ENCODE measurements at regions of chr11 and their contacts with region 1.

Region 1: DNA sequence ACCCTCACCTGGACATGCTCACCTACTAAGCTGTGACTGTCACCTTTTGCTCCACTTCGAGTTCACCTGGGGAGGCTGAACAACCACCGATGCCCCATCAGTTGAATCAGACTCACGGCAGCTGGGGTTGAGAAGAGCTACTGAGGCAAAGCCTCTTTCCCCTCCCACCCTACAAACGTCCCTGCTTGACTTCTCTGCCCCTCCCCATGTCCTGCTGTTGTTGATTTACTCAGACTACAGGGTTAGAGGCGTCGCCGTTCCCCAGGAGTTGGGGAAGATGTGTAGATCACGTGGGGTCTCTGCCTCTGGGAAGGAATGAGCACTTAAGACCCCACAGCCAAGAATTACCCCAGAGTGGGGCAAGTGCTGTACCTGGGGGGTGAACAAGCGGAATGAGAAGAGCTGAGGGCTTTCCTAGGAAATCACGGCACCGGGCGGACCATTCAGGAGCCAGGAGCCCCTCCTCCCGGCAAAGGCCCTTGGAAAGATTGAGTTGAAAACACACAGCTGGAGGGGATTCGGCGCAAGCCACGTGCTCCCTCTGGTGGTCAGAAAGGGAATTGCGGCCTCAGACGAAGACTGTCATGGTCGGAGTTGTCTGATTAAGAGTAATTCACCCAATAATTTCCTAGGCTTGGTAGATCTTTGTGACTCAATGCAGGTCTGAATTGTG is 7.0 kb downstream of the FXYD2 start:
- DNase-seq: peak; percentile 92
- ATAC-seq: peak; percentile 31
- H3K4me3 Mint-ChIP-seq: peak overlapping the region; percentile 47
- H3K27ac Mint-ChIP-seq: peak overlapping the region; percentile 95
- H3K4me1 Mint-ChIP-seq: peaks cover 81% of the 10 kb centered on the region
- H3K27me3 Mint-ChIP-seq: no peaks in the 10 kb centered on the region

Region 2: GRCh38 chr11:117796872-117797529 is 20.5 kb before region 1 on chr11 and contains the start of gene DSCAML1:
- CTCF ChIA-PET with region 1: interaction called, 20 read pairs
- POLR2A ChIA-PET with region 1: no interaction called
- DNase-seq: peak; percentile 43
- ATAC-seq: peak; percentile 91
- H3K4me3 Mint-ChIP-seq: no peak within 1 kb of the TSS
- H3K27ac Mint-ChIP-seq: no peak within 1 kb of the TSS
- H3K4me1 Mint-ChIP-seq: peaks cover 4% of the 10 kb centered on the region
- H3K27me3 Mint-ChIP-seq: peaks cover 62% of the 10 kb centered on the region
- total RNA-seq, gene DSCAML1: 0.16 to 0.37 TPM

Region 3: GRCh38 chr11:117843666-117844484 is 26.4 kb after region 1 on chr11:
- CTCF ChIA-PET with region 1: interaction called, 27 read pairs
- POLR2A ChIA-PET with region 1: no interaction called
- DNase-seq: peak; percentile 90
- ATAC-seq: peak; percentile 85
- H3K4me3 Mint-ChIP-seq: no peak overlapping the region
- H3K27ac Mint-ChIP-seq: no peak overlapping the region
- H3K4me1 Mint-ChIP-seq: peaks cover 7% of the 10 kb centered on the region
- H3K27me3 Mint-ChIP-seq: peaks cover 11% of the 10 kb centered on the region

Region 4: DNA sequence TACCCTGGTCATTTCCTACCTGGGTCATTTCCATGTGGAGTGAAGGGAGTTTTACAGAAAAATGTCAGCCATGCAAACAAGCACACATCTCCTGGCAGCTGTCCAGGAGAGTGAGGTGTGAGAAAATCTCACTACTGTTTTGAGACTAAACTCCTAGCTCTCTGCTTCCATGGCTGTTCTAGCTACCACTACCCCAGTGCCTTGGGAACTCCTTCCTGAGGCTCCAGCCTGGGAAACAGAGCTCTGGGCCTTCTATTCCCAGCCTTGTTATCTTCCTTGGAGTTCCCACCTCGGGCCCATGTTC is 114.5 kb after region 1 on chr11:
- CTCF ChIA-PET with region 1: interaction called, 19 read pairs
- POLR2A ChIA-PET with region 1: no interaction called
- DNase-seq: peak; percentile 47
- ATAC-seq: no peak
- H3K4me3 Mint-ChIP-seq: no peak overlapping the region
- H3K27ac Mint-ChIP-seq: peak overlapping the region; percentile 93
- H3K4me1 Mint-ChIP-seq: peaks cover 83% of the 10 kb centered on the region
- H3K27me3 Mint-ChIP-seq: no peaks in the 10 kb centered on the region

Region 5: DNA sequence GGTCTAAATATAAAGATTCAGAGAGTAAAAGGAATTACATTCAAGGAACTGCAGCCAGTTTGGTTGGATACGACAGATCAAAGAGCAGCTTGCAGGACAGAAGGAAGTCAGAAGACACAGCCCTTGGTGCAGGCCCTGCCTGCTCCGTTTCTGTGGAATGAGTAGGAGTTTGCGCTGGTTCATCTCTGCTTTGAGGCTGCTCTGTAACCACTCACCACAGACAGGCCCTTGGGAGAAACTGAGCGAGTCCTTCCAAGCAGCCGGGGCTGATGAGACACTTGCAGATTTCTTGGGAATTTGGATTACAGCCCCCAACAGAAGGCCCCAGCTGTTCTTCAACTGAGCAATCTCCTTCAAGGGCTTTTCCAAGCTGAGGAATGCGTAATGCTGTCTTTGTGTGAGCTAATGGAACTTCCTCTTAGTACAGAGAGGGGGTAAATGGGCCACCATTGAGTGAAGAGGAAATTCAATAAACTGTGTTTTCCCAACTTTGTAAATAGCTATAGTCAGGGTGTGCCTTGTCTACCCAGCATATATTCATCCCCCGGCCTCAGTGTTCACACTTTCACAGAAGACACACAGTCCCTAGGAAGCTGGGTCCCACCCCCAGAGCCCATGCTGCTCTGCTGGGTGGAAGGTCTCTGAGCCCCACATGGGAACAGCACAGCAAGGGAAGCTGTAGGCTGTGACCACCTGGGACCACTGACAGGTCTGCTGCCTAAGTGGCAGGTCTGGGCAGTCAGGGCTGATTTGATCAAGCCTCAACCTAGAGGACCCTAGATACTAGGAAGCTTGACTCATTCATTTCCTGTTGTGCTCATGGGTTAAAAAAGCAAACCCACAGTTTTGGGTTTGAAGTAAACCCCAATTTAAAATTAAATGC is 185.3 kb after region 1 on chr11:
- CTCF ChIA-PET with region 1: interaction called, 24 read pairs
- POLR2A ChIA-PET with region 1: interaction called, 10 read pairs
- DNase-seq: peak; percentile 70
- ATAC-seq: peak; percentile 52
- H3K4me3 Mint-ChIP-seq: peak overlapping the region; percentile 72
- H3K27ac Mint-ChIP-seq: peak overlapping the region; percentile 98
- H3K4me1 Mint-ChIP-seq: peaks cover 100% of the 10 kb centered on the region
- H3K27me3 Mint-ChIP-seq: no peaks in the 10 kb centered on the region